CD4-positive, alpha-beta T cell (primary cell): ENCODE measurements at regions of chr17 and their contacts with region 1.

Region 1: GRCh38 chr17:67376737-67377487 is at the start of gene PITPNC1:
- DNase-seq: peak; percentile 77 to 95 (median 84)
- ATAC-seq: peak; percentile 71
- H3K4me3 ChIP-seq: peak within 1 kb of the TSS; percentile 99
- H3K4me3 Mint-ChIP-seq: peak within 1 kb of the TSS; percentile 97
- H3K27ac ChIP-seq: peak within 1 kb of the TSS; percentile 76 to 95
- H3K27ac Mint-ChIP-seq: peak within 1 kb of the TSS; percentile 86
- H3K4me1 ChIP-seq: peaks cover 49% of the 10 kb centered on the region
- H3K4me1 Mint-ChIP-seq: peaks cover 41% of the 10 kb centered on the region
- H3K27me3 ChIP-seq: no peaks in the 10 kb centered on the region
- H3K27me3 Mint-ChIP-seq: no peaks in the 10 kb centered on the region
- CTCF ChIP-seq: no peak
- total RNA-seq, gene PITPNC1: 80.2 to 83.4 TPM

Region 2: DNA sequence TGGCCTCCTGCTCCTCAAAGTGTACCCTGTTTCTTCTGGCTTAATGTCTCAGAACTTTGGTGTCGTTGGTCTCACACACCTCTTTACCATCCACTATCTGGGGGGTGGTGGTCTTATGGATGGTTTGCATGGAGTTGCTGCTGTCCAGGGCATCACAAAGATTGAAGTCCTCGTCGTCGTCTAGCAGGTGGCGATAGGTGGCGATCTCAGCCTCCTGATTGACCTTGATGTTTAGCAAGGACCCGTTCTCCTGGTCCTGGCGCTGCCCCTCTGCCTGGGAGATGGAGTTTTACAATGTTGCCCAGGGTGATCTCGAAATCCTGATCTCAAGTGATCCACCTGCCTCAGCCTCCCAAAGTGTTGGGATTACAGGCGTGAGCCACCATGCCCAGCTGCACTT is 100.8 kb before region 1 on chr17:
- CTCF ChIA-PET with region 1: no interaction called
- POLR2A ChIA-PET with region 1: no interaction called
- intact Hi-C with region 1: no loop called
- DNase-seq: no peak
- ATAC-seq: no peak
- H3K4me3 ChIP-seq: no peak overlapping the region
- H3K4me3 Mint-ChIP-seq: no peak overlapping the region
- H3K27ac ChIP-seq: no peak overlapping the region
- H3K27ac Mint-ChIP-seq: no peak overlapping the region
- H3K4me1 ChIP-seq: no peaks in the 10 kb centered on the region
- H3K4me1 Mint-ChIP-seq: no peaks in the 10 kb centered on the region
- H3K27me3 ChIP-seq: no peaks in the 10 kb centered on the region
- H3K27me3 Mint-ChIP-seq: no peaks in the 10 kb centered on the region
- CTCF ChIP-seq: no peak

Region 3: DNA sequence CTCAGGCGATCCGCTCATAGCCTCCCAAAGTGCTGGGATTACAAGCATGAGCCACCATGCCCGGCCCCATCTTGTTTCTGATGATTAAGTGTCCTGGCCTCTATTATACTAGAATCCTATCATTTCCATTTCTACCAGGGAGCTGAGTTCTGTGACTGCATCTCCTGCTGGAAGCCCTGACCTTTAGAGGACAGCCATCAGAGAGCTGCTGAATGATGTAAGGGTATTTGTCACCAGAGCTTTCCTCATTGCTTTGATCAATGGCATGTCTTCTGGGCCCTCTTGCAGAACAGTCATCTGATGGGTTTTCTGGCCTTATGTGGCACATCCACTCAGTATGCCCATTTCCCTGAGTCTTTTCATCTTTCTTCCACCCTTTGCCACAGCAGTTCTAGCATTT is 50.5 kb before region 1 on chr17:
- CTCF ChIA-PET with region 1: no interaction called
- POLR2A ChIA-PET with region 1: no interaction called
- intact Hi-C with region 1: no loop called
- DNase-seq: no peak
- ATAC-seq: no peak
- H3K4me3 ChIP-seq: no peak overlapping the region
- H3K4me3 Mint-ChIP-seq: no peak overlapping the region
- H3K27ac ChIP-seq: no peak overlapping the region
- H3K27ac Mint-ChIP-seq: no peak overlapping the region
- H3K4me1 ChIP-seq: no peaks in the 10 kb centered on the region
- H3K4me1 Mint-ChIP-seq: no peaks in the 10 kb centered on the region
- H3K27me3 ChIP-seq: no peaks in the 10 kb centered on the region
- H3K27me3 Mint-ChIP-seq: no peaks in the 10 kb centered on the region
- CTCF ChIP-seq: no peak

Region 4: DNA sequence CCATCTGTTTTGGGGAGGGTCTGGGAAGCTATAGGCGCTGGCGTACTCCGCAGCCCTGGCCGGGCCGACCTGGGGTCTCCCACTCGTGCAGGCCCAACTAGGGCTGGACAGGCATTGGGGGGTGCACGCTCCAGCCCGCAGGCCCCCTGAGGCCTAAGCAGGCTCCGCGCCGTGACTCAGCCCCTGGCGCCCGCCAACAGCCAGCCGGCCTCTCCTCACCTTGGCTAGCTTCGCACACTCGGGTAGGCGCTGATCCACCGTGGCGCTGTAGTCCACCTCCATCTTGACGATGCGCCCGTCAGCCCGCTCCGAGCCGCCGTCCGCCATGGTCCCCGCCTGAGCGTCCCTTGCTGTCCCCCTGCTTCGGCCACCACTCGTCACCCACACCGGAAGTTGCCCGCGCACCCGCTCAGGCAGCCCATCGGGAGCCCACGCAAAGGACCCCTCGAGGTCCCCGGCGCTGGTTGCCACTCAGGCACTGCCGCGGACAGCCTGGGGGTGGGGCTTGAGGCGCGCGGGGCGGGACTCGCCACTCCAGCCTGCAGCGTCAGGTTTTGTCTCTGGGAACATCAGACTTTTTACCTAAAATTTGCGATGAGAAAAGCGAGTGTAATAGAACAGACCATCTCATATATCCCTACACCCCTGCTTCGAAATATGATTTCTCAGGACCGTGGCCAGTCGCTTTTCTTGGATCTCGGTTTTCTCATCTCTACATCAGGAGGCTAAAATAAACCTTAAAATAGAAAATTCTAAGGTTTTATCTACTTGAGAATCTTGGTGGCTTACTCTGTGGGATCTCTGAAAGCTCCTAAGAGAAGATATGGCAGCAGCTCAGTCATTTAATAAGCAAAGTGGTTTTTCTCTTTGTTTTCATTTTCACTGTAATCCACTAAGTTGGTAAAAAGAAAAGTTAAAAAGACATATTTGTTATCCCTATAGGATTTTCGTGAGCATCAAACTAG is 10.4 kb before region 1 on chr17 and contains the start of gene PSMD12:
- CTCF ChIA-PET with region 1: interaction called, 20 read pairs
- POLR2A ChIA-PET with region 1: interaction called, 40 read pairs
- intact Hi-C with region 1: loop called in 1 of 2 experiments (anchors 2 kb)
- DNase-seq: peak; percentile 86 to 96 (median 94)
- ATAC-seq: peak; percentile 93
- H3K4me3 ChIP-seq: peak within 1 kb of the TSS; percentile 87
- H3K4me3 Mint-ChIP-seq: peak within 1 kb of the TSS; percentile 97
- H3K27ac ChIP-seq: peak within 1 kb of the TSS; percentile 91 to 93
- H3K27ac Mint-ChIP-seq: peak within 1 kb of the TSS; percentile 89
- H3K4me1 ChIP-seq: peaks cover 33% of the 10 kb centered on the region
- H3K4me1 Mint-ChIP-seq: peaks cover 39% of the 10 kb centered on the region
- H3K27me3 ChIP-seq: no peaks in the 10 kb centered on the region
- H3K27me3 Mint-ChIP-seq: no peaks in the 10 kb centered on the region
- CTCF ChIP-seq: no peak
- total RNA-seq, gene PSMD12: 49.3 to 52.5 TPM

Region 5: DNA sequence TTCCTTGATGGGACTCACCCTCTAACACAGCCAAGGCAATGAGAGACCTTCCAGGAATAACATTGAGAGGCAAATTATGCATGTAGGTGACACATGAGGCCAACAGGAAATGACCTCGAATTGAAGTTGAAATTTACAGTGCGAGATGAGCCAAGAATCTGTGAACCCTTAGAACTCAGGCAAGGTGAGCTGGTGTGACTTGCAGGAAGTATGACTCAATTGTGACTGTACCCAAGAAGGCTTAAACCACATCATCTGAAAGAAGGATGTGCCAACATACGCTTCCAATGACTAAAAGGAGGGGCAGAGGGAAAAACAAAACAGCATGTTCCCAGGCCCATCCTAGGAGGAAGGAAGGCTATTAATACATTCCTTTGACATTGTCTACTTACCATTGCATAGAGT is 45.0 kb after region 1 on chr17:
- CTCF ChIA-PET with region 1: interaction called, 11 read pairs
- POLR2A ChIA-PET with region 1: interaction called, 20 read pairs
- intact Hi-C with region 1: loop called in 1 of 2 experiments (anchors 1 kb)
- DNase-seq: peak in 11 of 14 experiments; percentile 22 to 94 (median 61)
- ATAC-seq: peak; percentile 93
- H3K4me3 ChIP-seq: no peak overlapping the region
- H3K4me3 Mint-ChIP-seq: peak overlapping the region; percentile 16
- H3K27ac ChIP-seq: peak overlapping the region; percentile 68 to 88
- H3K27ac Mint-ChIP-seq: peak overlapping the region; percentile 87
- H3K4me1 ChIP-seq: peaks cover 80% of the 10 kb centered on the region
- H3K4me1 Mint-ChIP-seq: peaks cover 90% of the 10 kb centered on the region
- H3K27me3 ChIP-seq: no peaks in the 10 kb centered on the region
- H3K27me3 Mint-ChIP-seq: no peaks in the 10 kb centered on the region
- CTCF ChIP-seq: no peak

Region 6: GRCh38 chr17:67452681-67453554 is 76.0 kb after region 1 on chr17:
- CTCF ChIA-PET with region 1: interaction called, 11 read pairs
- POLR2A ChIA-PET with region 1: interaction called, 21 read pairs
- intact Hi-C with region 1: no loop called
- DNase-seq: peak in 3 of 14 experiments; percentile 74 to 91 (median 76)
- ATAC-seq: peak; percentile 90
- H3K4me3 ChIP-seq: peak overlapping the region; percentile 9
- H3K4me3 Mint-ChIP-seq: peak overlapping the region; percentile 85
- H3K27ac ChIP-seq: peak overlapping the region; percentile 20 to 71
- H3K27ac Mint-ChIP-seq: peak overlapping the region; percentile 91
- H3K4me1 ChIP-seq: peaks cover 81% of the 10 kb centered on the region
- H3K4me1 Mint-ChIP-seq: peaks cover 95% of the 10 kb centered on the region
- H3K27me3 ChIP-seq: no peaks in the 10 kb centered on the region
- H3K27me3 Mint-ChIP-seq: no peaks in the 10 kb centered on the region
- CTCF ChIP-seq: no peak

Region 7: GRCh38 chr17:67475236-67475937 is 98.5 kb after region 1 on chr17:
- CTCF ChIA-PET with region 1: interaction called, 187 read pairs
- POLR2A ChIA-PET with region 1: interaction called, 122 read pairs
- intact Hi-C with region 1: loop called (anchors 1 kb)
- DNase-seq: peak; percentile 79 to 94 (median 84)
- ATAC-seq: peak; percentile 86
- H3K4me3 ChIP-seq: peak overlapping the region; percentile 35
- H3K4me3 Mint-ChIP-seq: peak overlapping the region; percentile 74
- H3K27ac ChIP-seq: peak overlapping the region; percentile 66 to 73
- H3K27ac Mint-ChIP-seq: peak overlapping the region; percentile 96
- H3K4me1 ChIP-seq: peaks cover 64% of the 10 kb centered on the region
- H3K4me1 Mint-ChIP-seq: peaks cover 66% of the 10 kb centered on the region
- H3K27me3 ChIP-seq: no peaks in the 10 kb centered on the region
- H3K27me3 Mint-ChIP-seq: no peaks in the 10 kb centered on the region
- CTCF ChIP-seq: peak; percentile 96

Region 8: DNA sequence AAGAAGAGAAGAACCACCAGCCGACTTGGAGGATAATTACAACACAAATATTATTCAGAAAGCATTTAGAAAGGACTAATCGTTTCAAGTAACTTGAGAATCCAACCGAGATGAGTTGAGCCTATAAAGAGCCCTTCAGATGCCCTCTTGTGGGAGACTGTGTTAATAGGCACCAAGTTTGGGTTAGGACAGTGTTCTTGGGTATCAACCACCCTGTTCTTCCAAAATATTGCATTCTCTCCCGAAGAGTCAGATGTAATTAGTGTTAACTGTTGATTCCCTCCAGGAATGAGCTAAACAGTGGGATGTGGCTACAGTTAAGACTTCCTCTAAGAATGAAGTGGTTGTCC is 253.0 kb after region 1 on chr17:
- CTCF ChIA-PET with region 1: interaction called, 7 read pairs
- POLR2A ChIA-PET with region 1: no interaction called
- intact Hi-C with region 1: loop called (anchors 1 kb)
- DNase-seq: peak in 3 of 14 experiments; percentile 33 to 45 (median 44)
- ATAC-seq: peak; percentile 44
- H3K4me3 ChIP-seq: no peak overlapping the region
- H3K4me3 Mint-ChIP-seq: no peak overlapping the region
- H3K27ac ChIP-seq: no peak overlapping the region
- H3K27ac Mint-ChIP-seq: no peak overlapping the region
- H3K4me1 ChIP-seq: no peaks in the 10 kb centered on the region
- H3K4me1 Mint-ChIP-seq: peaks cover 9% of the 10 kb centered on the region
- H3K27me3 ChIP-seq: no peaks in the 10 kb centered on the region
- H3K27me3 Mint-ChIP-seq: no peaks in the 10 kb centered on the region
- CTCF ChIP-seq: peak; percentile 37

Region 9: GRCh38 chr17:67824735-67825626 is 448.1 kb after region 1 on chr17 and contains the start of gene BPTF:
- CTCF ChIA-PET with region 1: no interaction called
- POLR2A ChIA-PET with region 1: no interaction called
- intact Hi-C with region 1: loop called in 1 of 2 experiments (anchors 5 kb)
- DNase-seq: peak; percentile 83 to 98 (median 90)
- ATAC-seq: peak; percentile 75
- H3K4me3 ChIP-seq: peak within 1 kb of the TSS; percentile 92
- H3K4me3 Mint-ChIP-seq: peak within 1 kb of the TSS; percentile 100
- H3K27ac ChIP-seq: peak within 1 kb of the TSS; percentile 48 to 74
- H3K27ac Mint-ChIP-seq: peak within 1 kb of the TSS; percentile 100
- H3K4me1 ChIP-seq: peaks cover 27% of the 10 kb centered on the region
- H3K4me1 Mint-ChIP-seq: peaks cover 42% of the 10 kb centered on the region
- H3K27me3 ChIP-seq: no peaks in the 10 kb centered on the region
- H3K27me3 Mint-ChIP-seq: peaks cover under 1% of the 10 kb centered on the region
- CTCF ChIP-seq: peak; percentile 88
- total RNA-seq, gene BPTF: 117 to 125 TPM